MCF 10A (cell line): ENCODE measurements at regions of chr2 and their contacts with region 1.

Region 1: DNA sequence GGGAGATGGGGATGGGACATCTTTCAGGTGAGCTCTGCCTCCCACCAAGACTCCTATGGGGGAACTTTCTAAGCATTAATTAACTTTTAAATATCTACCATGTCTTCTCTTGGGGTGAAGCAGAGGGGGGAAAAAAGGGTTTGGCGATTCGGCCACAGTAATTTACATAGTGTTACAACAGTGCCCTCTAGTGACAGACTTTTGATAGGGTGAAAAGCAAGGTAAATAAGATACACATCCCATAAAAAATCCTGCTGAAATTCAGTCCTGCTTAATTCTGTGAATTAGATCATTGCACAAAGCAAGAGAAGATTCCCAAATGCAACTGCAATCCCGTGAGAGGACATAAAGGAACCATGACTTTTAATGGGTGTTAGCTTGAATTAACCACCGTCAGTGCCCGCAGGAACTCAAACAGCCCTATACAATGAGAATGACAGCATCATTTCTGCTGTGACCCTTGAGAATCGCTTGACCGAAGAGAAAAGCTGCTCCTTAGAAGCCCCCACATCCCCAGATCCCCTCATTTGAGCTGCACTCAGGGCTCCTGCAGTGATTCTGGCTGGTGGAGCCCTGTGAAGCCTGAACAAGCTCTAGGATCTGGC is 32.8 kb downstream of the FAM124B start:
- DNase-seq: peak; percentile 66
- H3K4me3 Mint-ChIP-seq: no peak overlapping the region
- H3K27ac Mint-ChIP-seq: no peak overlapping the region
- H3K4me1 Mint-ChIP-seq: peaks cover 6% of the 10 kb centered on the region
- H3K27me3 Mint-ChIP-seq: no peaks in the 10 kb centered on the region
- CTCF ChIP-seq: peak; percentile 61

Region 2: DNA sequence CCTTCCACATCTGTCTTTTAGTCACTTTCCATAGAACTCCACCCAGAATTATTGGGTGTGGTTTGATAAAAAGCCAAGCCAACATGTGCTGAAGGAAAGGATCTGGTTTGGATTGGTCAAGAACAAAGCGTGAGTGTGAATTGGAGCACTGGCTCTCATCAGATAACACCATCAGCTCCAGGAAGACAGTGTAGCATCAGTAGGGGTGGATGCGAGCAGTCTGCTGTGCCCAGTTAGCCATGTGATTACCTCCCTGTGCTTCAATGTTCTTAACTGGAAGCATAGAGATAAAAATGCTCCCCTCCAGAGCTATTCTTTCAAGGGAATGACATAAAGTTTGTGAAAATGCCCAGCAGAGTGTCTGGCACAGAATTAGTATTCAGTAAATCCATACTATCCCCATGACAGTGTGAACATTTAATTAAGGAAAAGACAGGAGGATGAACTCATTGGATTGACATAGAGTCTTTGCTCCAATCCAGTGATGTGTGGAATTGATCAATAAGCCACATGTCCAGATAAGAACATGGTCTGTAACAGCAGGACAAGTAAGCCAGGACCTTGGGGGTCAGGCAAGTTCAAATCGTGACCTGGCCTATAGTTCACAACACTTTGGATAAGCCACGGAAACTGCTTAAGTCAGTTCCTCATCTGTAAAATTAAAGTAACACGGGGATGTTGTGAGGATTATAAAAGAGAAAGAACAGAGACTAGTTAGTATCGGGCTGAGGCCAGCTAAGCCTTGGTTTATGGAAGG is 35.2 kb before region 1 on chr2:
- CTCF ChIA-PET with region 1: no interaction called
- POLR2A ChIA-PET with region 1: no interaction called
- intact Hi-C with region 1: no loop called
- DNase-seq: peak; percentile 1
- H3K4me3 Mint-ChIP-seq: no peak overlapping the region
- H3K27ac Mint-ChIP-seq: no peak overlapping the region
- H3K4me1 Mint-ChIP-seq: peaks cover 6% of the 10 kb centered on the region
- H3K27me3 Mint-ChIP-seq: no peaks in the 10 kb centered on the region
- CTCF ChIP-seq: no peak

Region 3: GRCh38 chr2:224386876-224387275 is 17.7 kb after region 1 on chr2:
- CTCF ChIA-PET with region 1: interaction called, 31 read pairs
- POLR2A ChIA-PET with region 1: no interaction called
- intact Hi-C with region 1: no loop called
- DNase-seq: no peak
- H3K4me3 Mint-ChIP-seq: no peak overlapping the region
- H3K27ac Mint-ChIP-seq: no peak overlapping the region
- H3K4me1 Mint-ChIP-seq: no peaks in the 10 kb centered on the region
- H3K27me3 Mint-ChIP-seq: no peaks in the 10 kb centered on the region
- CTCF ChIP-seq: no peak